MCF 10A (cell line): ENCODE measurements at regions of chr12 and their contacts with region 1.

Region 1: DNA sequence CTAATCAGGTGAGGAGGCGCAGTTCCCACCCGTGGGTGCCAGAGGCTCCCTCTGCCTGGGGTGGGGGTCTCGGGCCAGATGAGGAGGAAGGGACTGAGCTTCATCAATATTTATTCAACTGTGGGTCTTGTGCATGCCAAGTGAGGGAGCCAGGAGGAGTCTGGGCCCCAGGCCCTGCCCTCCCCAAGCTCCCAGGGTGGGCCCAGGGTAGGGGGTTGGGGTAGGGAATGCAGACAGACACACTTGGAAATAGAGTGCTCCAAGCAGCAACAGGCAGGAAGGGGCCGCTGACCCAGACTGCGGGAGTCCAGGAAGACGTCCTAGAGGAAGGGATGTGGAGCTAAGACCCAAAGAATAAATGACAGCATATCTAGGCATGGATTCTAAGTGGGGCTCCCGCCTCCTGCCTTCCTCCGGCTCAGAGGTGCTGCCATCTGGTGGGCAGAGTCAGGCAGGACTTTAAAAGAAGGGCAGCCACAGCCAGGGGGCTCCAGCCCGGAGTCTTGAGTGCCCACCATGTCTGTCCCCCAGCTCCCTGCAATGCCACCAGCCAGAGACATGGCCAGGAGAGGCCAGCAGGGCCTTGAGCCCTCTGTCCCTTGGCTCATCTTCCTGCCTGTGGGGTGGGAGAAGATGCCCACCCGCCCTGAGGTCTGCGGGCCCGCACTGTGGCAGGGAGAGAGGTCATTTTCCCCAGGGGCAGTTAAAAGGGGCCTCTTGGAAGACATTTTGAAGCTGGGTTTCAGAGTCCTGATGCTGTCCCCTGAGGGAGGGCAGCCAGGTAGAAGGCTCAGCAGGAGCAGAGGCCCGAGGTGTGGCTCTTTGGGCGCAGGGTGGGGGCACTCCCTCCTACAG is 70.1 kb downstream of the PHETA1 start:
- DNase-seq: peak; percentile 63
- H3K4me3 Mint-ChIP-seq: no peak overlapping the region
- H3K27ac Mint-ChIP-seq: no peak overlapping the region
- H3K4me1 Mint-ChIP-seq: no peaks in the 10 kb centered on the region
- H3K27me3 Mint-ChIP-seq: no peaks in the 10 kb centered on the region
- CTCF ChIP-seq: peak; percentile 84

Region 2: GRCh38 chr12:111274777-111275176 is 24.0 kb before region 1 on chr12:
- CTCF ChIA-PET with region 1: interaction called, 12 read pairs
- POLR2A ChIA-PET with region 1: no interaction called
- intact Hi-C with region 1: no loop called
- DNase-seq: peak; percentile 14
- H3K4me3 Mint-ChIP-seq: no peak overlapping the region
- H3K27ac Mint-ChIP-seq: no peak overlapping the region
- H3K4me1 Mint-ChIP-seq: peaks cover 16% of the 10 kb centered on the region
- H3K27me3 Mint-ChIP-seq: peaks cover 34% of the 10 kb centered on the region
- CTCF ChIP-seq: peak; percentile 27

Region 3: GRCh38 chr12:111313833-111314259 is 15.0 kb after region 1 on chr12:
- CTCF ChIA-PET with region 1: interaction called, 16 read pairs
- POLR2A ChIA-PET with region 1: no interaction called
- intact Hi-C with region 1: no loop called
- DNase-seq: peak; percentile 75
- H3K4me3 Mint-ChIP-seq: no peak overlapping the region
- H3K27ac Mint-ChIP-seq: no peak overlapping the region
- H3K4me1 Mint-ChIP-seq: peaks cover 6% of the 10 kb centered on the region
- H3K27me3 Mint-ChIP-seq: no peaks in the 10 kb centered on the region
- CTCF ChIP-seq: peak; percentile 91

Region 4: GRCh38 chr12:111578274-111578970 is 279.6 kb after region 1 on chr12:
- CTCF ChIA-PET with region 1: no interaction called
- POLR2A ChIA-PET with region 1: no interaction called
- intact Hi-C with region 1: no loop called
- DNase-seq: peak; percentile 66
- H3K4me3 Mint-ChIP-seq: no peak overlapping the region
- H3K27ac Mint-ChIP-seq: no peak overlapping the region
- H3K4me1 Mint-ChIP-seq: peaks cover 12% of the 10 kb centered on the region
- H3K27me3 Mint-ChIP-seq: no peaks in the 10 kb centered on the region
- CTCF ChIP-seq: no peak